Activated naive CD4-positive, alpha-beta T cell treated with anti-CD3 and anti-CD28 coated beads for 36 hours (primary cell): ENCODE measurements at regions of chr9 and their contacts with region 1.

Region 1: GRCh38 chr9:100216178-100216787 is 117.2 kb downstream of the INVS start:
- DNase-seq: peak; percentile 83
- H3K4me3 Mint-ChIP-seq: no peak overlapping the region
- H3K27ac Mint-ChIP-seq: no peak overlapping the region
- H3K4me1 Mint-ChIP-seq: no peaks in the 10 kb centered on the region
- H3K27me3 Mint-ChIP-seq: no peaks in the 10 kb centered on the region

Region 2: GRCh38 chr9:99162759-99163364 is 1053.4 kb before region 1 on chr9:
- CTCF ChIA-PET with region 1: no interaction called
- intact Hi-C with region 1: loop called (anchors 5 kb)
- DNase-seq: no peak
- H3K4me3 Mint-ChIP-seq: no peak overlapping the region
- H3K27ac Mint-ChIP-seq: no peak overlapping the region
- H3K4me1 Mint-ChIP-seq: peaks cover 15% of the 10 kb centered on the region
- H3K27me3 Mint-ChIP-seq: peaks cover 12% of the 10 kb centered on the region

Region 3: GRCh38 chr9:99266255-99267023 is 949.8 kb before region 1 on chr9:
- CTCF ChIA-PET with region 1: no interaction called
- intact Hi-C with region 1: loop called (anchors 10 kb)
- DNase-seq: peak; percentile 82
- H3K4me3 Mint-ChIP-seq: peak overlapping the region; percentile 19
- H3K27ac Mint-ChIP-seq: no peak overlapping the region
- H3K4me1 Mint-ChIP-seq: peaks cover 17% of the 10 kb centered on the region
- H3K27me3 Mint-ChIP-seq: peaks cover 1% of the 10 kb centered on the region

Region 4: GRCh38 chr9:99807276-99807852 is 408.9 kb before region 1 on chr9:
- CTCF ChIA-PET with region 1: no interaction called
- intact Hi-C with region 1: loop called (anchors 1 kb)
- DNase-seq: peak; percentile 79
- H3K4me3 Mint-ChIP-seq: no peak overlapping the region
- H3K27ac Mint-ChIP-seq: no peak overlapping the region
- H3K4me1 Mint-ChIP-seq: peaks cover 21% of the 10 kb centered on the region
- H3K27me3 Mint-ChIP-seq: no peaks in the 10 kb centered on the region

Region 5: DNA sequence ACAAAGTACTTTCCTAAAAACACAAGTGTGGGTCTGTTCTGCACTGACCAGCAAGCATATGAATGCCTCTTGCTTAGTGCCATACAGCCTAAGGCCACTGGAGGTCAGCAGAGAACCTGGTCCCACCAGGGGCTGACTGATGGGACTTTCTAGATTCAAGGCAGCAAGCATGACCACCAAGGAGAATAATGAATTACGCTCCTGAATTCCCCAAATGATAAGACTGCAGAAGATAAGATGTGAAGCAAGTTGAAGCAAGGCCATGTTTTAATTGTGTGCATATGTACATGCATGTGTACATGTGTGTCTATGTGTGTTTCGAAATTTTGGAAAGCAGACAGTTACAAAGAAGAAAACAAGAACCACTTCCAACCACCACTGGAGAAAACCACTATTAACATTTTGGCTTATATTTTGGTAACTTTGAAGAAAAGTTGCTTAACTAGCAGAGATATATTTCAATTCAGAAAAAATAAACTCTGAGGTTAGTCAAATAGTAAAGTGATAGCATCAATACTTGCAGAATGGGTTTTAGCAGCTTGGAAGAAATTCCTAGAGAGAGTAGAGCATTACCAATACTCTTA is 188.0 kb before region 1 on chr9:
- CTCF ChIA-PET with region 1: interaction called, 13 read pairs
- intact Hi-C with region 1: loop called (anchors 1 kb)
- DNase-seq: peak; percentile 84
- H3K4me3 Mint-ChIP-seq: no peak overlapping the region
- H3K27ac Mint-ChIP-seq: no peak overlapping the region
- H3K4me1 Mint-ChIP-seq: peaks cover 3% of the 10 kb centered on the region
- H3K27me3 Mint-ChIP-seq: no peaks in the 10 kb centered on the region

Region 6: DNA sequence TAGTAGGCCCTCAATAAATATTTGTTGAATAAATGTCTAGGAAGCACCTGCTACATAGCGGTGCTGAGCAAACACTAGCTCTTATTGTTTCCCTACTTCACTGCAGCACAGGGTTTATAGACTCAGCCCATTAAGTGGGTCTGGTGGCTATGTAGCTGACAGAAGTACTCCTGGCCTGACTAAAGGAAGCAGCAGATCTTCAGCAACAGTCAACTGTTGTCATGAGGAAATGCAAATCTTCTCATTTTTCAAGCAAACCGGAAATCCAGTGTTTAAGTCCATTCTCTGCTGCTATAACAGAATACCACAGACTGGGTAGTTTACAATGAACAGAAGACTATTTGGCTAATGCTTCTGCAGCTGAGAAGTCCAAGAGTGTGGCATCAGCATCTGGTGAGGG is 139.3 kb after region 1 on chr9:
- CTCF ChIA-PET with region 1: no interaction called
- intact Hi-C with region 1: no loop called
- DNase-seq: no peak
- H3K4me3 Mint-ChIP-seq: no peak overlapping the region
- H3K27ac Mint-ChIP-seq: no peak overlapping the region
- H3K4me1 Mint-ChIP-seq: peaks cover 15% of the 10 kb centered on the region
- H3K27me3 Mint-ChIP-seq: no peaks in the 10 kb centered on the region

Region 7: DNA sequence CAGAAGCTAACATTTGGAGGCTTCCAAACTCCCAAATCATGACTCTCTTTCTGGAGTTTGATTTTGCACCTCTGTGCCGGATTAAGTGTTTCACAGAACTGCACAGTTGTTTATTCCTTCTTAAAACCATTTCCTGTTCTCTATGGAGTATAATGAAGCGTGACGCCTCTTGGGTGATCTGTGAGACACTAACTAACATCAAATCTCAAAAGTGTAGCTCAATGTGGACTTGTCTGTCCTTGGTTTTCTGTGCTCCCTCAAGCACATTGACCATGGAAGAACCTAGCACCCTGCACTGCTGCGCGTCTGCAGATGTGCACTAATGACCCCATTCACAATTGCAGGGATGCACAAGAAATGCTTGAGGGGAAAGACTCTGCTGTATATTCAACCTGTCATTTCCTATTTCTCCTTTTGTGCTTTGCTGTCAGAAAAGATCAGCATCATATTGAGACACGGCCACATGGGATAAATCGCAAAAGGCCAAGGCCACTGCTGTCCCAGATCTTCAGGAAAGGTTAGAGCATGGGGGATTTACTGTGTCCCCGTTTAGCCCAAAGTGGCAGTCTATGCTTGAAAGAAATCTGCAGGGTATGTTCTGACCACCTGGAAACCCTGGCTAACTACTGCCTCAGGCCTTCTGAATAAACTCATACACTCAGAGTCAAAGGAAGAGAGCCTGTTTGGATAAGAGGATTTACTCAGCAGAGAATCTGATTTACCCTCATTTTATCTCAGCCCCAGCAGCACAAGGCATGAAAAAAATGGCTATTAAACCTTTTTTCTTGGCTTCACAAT is 1058.9 kb after region 1 on chr9:
- CTCF ChIA-PET with region 1: no interaction called
- intact Hi-C with region 1: no loop called
- DNase-seq: no peak
- H3K4me3 Mint-ChIP-seq: no peak overlapping the region
- H3K27ac Mint-ChIP-seq: no peak overlapping the region
- H3K4me1 Mint-ChIP-seq: no peaks in the 10 kb centered on the region
- H3K27me3 Mint-ChIP-seq: peaks cover 14% of the 10 kb centered on the region

Region 8: DNA sequence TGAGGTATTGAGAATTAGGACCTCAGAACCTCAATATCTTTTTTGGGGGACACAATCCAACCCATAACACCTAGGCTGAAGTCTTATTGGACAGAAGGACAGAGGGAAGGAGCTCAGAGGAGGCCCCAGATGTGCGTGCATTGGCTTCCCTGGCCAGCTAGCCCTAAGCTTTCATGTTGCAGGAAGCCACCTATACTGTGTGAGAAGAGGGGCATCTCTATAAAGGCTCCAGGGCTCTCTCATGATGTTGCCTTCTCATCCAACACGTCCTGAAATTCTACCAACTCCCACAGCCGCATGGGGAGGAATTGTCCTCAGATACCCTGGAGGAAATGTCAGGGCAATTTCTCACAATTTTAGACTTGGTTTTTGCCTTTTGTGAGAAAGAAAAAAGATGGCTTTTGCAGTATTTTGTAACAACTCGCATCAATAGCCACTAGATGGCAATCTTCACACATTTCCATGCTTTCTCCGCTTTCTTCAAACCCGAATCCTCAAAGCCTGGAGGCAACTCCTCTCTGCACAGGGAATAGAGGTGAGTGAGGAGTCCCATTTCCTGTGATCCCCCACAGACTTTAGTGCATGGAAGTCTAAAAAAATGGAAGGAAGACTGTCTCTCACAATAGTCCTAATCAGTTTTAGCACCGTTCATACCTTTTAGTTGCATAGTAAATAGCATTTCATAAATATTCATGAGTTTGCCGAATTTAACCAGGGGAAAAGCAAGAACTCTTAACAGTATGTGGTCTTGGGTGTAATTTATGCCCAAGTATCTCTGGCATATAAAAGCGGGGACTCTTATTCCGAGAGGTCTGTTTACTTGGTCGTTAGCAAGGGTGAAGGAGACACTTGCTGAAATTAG is 1385.9 kb after region 1 on chr9:
- CTCF ChIA-PET with region 1: no interaction called
- intact Hi-C with region 1: no loop called
- DNase-seq: peak; percentile 19
- H3K4me3 Mint-ChIP-seq: no peak overlapping the region
- H3K27ac Mint-ChIP-seq: no peak overlapping the region
- H3K4me1 Mint-ChIP-seq: peaks cover 4% of the 10 kb centered on the region
- H3K27me3 Mint-ChIP-seq: no peaks in the 10 kb centered on the region